Right ventricle myocardium superior (tissue), 1 donor: ENCODE measurements at regions of chr3 and their contacts with region 1.

Region 1: DNA sequence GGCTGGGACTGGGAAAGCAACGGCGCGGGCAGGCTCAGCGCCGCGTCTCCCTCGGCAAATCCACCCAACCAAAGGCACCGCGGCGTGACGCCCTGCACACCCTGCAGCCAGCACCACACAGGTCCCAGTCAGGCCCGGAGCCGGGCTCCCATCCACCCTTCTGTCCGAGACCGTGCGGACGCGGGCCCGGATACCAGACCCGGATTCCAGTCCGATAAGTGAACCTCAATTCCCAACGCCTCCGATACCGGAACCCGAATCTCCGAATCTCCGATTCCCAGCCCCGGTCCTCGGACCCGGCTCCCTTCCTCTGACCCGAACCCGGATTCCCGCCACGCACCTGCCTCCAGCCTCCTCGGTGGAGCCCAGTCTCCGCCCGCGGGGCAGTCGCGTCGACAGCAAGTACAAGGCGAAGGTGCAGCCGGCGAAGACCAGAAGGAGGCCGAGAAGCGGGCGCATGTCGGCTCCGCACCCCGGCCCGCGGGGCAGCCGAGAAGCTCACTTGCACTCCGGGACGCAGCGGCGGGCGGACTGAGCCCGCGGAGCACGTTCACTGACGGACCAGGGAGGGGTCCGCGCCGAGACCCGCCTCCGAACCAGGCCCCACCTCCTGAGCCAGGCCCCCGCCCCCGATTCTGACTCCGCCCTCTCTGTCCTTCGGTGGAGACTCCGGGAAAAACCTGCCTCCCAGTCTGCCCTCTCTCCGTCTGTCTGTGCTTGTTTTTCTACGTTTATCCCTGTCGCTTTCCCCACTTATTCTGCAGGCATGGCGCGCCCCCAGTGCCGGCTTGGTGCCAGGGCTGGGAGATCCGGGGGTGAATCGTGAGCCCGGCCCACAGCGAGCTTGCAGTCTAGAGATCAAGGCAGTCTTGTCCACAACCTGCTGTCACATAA is at the start of gene TMEM41A:
- DNase-seq: peak; percentile 96
- ATAC-seq: peak; percentile 99
- total RNA-seq, gene TMEM41A: 9.2 TPM

Region 2: DNA sequence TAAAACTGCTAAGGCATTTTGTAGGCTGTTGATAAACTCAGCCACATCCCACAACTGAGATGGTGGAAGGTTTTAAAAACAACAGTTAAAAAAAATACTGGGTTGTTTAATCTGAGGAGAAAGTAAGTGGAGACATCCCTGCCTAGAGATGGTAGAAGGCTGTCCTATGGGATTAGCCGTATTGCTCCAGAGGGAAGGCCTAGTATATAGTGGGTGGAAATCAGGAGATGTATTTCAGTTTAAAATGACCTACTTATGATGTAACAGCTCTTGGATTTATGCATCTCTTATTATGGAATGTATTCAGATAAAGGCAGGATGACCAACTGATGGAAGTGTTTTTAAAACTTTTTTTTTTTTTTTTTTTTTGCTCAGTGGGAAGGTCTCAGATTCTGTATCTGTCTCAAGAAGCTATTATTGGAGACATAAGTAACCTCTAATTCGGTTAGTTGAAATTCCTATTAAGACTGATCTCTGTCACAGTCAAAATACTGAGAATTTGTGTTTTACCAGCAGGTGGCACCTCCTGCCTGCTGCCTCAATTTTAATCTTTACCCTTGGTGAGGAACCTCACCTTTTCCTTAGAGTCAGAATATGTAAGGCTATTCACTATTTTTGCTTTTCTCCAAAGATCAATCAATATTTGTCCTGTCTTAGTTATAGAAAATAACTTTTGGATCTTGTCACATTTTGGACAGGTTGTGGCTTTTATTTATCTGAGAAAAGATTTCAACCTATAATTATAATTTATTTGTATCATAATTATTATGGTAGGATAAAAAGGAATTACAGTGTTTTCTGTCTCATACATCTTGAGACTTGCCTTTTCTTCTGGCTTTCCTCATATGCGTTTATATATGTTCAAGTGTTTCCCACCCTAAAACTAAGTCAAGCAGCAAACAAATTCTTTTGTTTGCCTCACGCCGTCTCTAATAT is 623.8 kb before region 1 on chr3:
- intact Hi-C with region 1: no loop called
- DNase-seq: no peak
- ATAC-seq: no peak

Region 3: DNA sequence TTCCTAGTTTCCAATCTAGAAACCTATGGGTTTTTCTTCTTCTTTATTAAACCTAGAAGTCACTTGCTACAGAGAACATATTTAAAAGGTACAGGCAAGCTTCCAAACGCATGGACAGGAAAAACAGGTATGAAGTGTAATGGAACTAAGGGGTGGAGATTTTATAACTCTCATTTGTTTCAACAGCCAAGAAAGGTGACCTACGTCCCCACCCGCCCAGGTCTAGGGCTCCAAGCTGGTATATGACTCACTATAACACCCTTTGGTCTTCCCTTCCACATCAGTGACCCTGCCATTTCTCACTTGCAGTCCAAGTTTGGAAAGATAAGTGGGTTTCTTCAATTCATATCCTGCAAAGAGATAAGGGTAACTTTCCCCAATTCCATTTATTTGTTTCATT is 59.6 kb after region 1 on chr3:
- intact Hi-C with region 1: loop called (anchors 5 kb)
- DNase-seq: no peak
- ATAC-seq: peak; percentile 48